HEK293T (cell line): ENCODE measurements at regions of chr9 and their contacts with region 1.

Region 1: DNA sequence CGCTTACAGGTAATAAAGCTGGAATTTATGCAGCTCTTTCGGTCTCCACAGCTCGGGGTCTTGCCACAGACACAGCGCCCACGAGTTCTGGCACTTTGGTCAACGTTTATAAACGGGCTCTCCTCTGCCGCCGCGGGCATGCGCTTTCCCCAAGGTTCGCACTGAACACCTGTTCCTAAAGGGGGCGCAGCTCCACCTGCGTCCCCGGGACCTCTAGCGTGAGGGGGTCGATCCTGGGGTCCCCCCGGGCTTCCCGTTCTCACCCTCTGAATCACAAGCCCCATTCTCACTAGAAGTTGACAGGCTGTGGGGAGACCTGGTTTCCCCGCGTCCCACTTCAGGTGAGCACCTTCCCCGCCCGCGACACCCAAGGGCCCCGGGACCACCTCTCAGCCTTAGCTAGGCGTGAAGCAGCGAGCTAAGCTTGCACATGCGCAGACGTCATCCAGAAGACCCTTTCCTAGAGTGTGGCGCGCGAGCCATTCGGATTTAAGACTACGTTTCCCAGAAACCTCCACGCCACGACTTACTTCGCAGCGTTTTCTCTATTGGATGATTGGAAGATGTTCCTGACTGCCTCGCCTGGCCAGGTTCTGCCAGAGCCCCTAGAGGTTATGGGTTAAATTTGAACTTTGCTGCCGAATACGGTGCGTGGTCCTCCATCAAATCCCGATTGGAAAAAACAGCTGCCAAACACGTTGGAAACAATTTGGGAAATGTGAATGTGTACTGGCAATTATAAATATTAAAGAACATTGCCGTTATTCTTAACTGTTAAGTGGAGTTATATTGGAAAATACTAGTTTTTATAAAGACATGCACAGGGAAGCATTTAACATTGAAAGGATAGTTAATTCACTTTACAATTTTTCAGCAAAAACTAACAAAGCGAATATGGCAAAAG is 21.4 kb upstream of the ZNF782 start:
- DNase-seq: peak; percentile 88

Region 2: DNA sequence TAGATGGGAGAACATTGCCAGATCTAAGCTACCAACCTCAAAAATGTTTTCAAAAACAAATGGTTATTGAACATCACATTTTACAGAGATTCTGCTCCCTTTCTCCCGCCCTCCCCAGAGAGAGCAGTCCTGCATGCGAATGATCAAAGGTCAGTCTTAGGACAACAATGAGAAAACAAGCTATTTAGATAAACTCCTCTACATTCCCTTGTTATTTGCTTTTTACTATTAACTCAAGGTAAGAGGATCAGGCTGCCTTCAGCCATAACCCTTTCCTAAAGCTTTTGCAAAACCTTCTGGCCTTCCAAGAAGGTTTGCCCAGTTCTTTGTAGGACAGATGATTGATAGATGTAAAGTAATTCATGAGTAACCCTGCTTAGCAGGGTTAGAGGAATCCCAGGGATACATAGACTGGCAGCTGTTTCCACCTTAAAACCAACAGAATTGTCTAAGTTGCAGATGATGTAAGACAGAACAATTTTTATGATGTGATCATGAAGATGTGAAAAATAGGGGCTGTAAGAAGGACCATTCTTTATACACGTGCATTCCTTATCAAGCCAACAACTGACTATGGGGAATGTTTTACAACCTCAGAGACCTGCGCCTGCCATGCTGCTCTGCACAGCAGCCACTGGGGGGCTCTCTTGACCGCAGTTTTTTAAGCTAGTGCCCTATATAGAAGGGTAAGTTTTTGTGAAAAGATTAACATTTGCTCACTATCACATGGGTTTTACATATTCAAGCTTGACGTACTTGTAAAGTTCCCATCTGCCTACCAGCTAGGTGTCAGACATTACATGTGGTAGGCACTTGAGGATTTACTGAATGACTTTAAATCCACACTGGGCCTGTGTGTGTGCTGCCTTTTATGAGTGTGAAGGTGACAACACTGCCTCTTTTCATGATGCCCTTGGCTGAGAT is 19.1 kb before region 1 on chr9:
- CTCF ChIA-PET with region 1: interaction called, 19 read pairs
- POLR2A ChIA-PET with region 1: interaction called, 11 read pairs
- DNase-seq: peak; percentile 56

Region 3: GRCh38 chr9:96892131-96892530 is 16.4 kb after region 1 on chr9:
- CTCF ChIA-PET with region 1: no interaction called
- POLR2A ChIA-PET with region 1: no interaction called
- DNase-seq: no peak

Region 4: DNA sequence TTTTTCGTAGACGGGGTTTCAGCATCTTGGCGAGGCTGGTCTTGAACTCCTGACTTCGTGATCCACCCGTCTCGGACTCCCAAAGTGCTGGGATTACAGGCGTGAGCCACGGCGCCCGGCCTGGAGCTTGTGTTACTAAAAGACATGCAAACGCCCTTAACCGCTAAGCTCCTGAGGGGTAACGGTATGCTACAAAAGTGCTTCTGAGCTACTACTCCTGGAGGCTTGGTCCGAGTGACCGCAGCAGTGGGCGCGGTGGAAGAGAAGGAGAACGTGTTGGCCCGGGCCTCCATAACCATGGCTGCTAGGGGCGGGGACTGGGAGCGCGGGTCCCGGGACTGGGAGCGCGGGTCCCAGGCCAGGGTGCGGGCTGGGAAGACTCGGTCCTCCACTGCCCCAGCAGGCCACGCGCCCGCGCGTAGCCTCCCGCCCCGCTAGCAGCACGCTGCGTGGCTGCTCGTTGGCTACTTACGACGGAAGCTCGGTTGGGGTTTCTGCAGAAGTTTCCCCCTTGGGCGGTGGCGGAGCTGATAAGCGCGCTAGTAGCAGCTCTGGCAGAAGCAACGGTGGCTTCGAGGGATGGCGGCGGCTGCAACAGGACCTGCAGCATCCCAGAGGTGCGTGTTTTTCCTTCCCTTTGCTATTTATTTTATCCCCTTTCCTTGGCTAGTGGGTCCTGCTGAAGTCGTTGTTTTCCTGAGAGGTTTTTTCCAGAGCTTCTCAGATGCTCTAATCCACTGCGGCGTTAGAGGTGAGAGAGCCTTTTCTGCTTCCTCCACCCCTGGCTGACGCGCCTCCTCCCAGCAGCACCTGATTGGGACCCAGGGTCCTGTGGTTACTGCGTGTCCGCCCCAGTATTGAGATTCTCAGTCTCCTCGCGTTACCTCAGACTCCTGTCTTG is 362.5 kb after region 1 on chr9:
- CTCF ChIA-PET with region 1: no interaction called
- POLR2A ChIA-PET with region 1: interaction called, 11 read pairs
- DNase-seq: peak; percentile 69